ENCODE measurements at regions of chr19 and their contacts with region 1.

Region 1: GRCh38 chr19:10760273-10760944 is 42.5 kb downstream of the DNM2 start:
- DNase-seq: no peak
- H3K4me3 Mint-ChIP-seq: peak overlapping the region; percentile 66
- H3K27ac Mint-ChIP-seq: peak overlapping the region; percentile 86
- H3K4me1 Mint-ChIP-seq: peaks cover 78% of the 10 kb centered on the region
- H3K27me3 Mint-ChIP-seq: no peaks in the 10 kb centered on the region

Region 2: DNA sequence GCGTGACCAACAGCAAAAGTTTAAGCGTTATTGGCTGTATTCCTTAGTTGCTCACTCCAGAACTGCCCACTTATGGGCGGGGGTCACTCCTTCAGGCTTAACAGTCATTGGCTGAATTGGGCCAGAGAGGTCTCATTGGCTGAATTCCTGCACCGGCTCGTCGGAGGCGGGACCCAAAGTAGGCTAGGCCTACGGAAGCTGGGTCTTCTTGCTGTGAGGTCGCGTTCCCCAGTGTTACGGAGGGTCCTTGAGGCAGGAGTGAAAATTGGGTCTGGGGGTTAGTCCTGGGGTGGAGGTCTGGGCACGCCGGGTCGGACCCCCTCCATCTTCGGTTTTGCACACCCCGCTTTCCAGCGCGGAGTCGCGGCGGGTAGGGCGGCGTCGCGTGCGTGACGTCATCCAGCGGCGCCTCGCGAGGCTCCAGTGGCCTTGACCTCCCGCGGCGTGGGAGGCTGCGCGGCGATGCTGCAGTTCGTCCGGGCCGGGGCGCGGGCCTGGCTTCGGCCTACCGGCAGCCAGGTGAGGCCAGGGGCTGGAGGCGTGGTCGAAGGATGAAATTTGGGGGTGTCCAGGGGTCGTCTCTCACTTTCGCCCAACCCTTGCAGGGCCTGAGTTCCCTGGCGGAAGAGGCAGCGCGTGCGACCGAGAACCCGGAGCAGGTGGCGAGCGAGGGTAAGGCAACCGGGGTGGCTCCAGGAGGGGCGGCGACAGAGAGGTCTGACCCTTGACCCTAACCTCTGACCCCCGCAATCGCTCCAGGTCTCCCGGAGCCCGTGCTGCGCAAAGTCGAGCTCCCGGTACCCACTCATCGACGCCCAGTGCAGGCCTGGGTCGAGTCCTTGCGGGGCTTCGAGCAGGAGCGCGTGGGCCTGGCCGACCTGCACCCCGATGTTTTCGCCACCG is 508.4 kb before region 1 on chr19 and contains the start of gene MRPL4:
- intact Hi-C with region 1: no loop called
- DNase-seq: peak; percentile 95
- H3K4me3 Mint-ChIP-seq: peak within 1 kb of the TSS; percentile 95
- H3K27ac Mint-ChIP-seq: peak within 1 kb of the TSS; percentile 96
- H3K4me1 Mint-ChIP-seq: peaks cover 19% of the 10 kb centered on the region
- H3K27me3 Mint-ChIP-seq: no peaks in the 10 kb centered on the region
- total RNA-seq, gene MRPL4: 163 and 168 TPM in 2 replicates

Region 3: DNA sequence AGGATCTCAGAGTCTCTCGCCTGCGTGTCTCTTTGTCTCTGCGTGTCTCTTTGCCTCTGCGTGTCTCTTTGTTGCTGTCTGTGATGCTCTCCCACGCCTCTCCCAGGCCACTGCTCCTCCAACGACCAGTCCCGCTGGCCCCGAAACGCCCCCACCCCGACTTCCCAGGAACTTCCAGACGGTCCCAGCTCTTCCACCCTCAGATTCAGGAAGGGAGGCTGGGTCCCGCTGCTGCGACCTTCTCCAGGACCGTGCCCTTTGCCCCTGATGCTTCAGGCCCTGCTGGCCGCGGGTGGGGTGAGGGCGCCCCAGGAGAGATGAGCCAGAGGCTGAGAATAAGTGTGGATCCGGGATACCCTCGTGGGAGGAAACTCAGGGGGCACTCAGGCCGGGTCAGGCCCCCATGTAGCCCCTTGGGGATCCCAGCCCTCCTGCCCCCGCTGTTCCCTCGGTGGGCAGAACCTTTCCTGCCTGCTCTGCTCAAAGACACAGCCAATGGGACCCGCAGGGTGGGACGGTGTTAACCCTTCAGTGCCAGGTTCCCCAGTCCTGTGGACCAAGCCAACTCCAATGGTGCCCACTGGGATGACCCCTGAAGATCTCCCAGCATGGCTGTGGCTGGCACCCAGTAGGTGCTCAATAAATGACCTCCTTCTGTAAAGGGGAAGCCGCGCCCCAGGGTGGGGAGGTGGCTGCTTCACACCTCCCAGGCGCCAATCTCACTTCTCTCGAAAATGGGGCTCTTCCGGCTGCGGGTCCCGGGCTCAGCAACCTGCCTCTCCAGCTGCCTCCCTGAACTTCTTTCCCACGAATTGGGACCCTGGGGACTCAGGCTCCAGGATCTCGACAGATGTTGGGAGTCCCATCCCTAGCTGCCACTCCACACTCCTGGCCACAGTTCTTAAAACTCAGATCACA is 241.7 kb before region 1 on chr19:
- intact Hi-C with region 1: no loop called
- DNase-seq: no peak
- H3K4me3 Mint-ChIP-seq: peak overlapping the region; percentile 57
- H3K27ac Mint-ChIP-seq: no peak overlapping the region
- H3K4me1 Mint-ChIP-seq: peaks cover 22% of the 10 kb centered on the region
- H3K27me3 Mint-ChIP-seq: peaks cover 60% of the 10 kb centered on the region

Region 4: GRCh38 chr19:10730923-10731322 is 29.5 kb before region 1 on chr19:
- intact Hi-C with region 1: loop called (anchors 1 kb)
- DNase-seq: no peak
- H3K4me3 Mint-ChIP-seq: no peak overlapping the region
- H3K27ac Mint-ChIP-seq: peak overlapping the region; percentile 89
- H3K4me1 Mint-ChIP-seq: peaks cover 36% of the 10 kb centered on the region
- H3K27me3 Mint-ChIP-seq: no peaks in the 10 kb centered on the region